Gastrocnemius medialis (tissue), 4 donors: ENCODE measurements at regions of chr2 and their contacts with region 1.

Region 1: DNA sequence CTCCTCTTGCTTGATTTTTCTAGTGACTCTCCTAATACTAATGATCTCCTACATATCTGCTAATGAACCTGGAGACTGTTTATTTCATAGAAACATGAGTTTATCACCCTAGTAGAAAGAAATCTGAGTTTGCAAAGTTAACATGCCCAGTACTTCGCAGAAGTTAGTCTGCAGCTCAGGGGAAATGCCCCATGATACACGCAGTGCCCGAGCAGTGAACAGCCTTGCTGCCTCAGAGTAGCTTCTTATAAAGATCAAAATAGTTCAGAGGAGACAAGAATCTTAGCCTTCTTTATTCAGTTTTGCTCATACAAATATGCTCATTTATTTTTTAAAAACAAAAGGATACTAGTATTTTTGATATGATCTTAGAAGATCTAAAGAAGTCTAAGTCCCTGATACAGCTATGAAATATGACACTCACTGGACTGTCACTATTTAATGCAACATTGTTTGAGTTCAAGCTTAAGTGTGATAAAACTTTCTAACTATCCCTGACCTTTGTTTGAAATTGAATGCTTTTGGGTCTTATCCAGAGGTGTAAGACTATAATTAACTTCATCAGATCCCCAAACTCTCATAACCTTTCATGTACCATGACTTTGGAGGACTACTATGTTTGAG is 20.5 kb downstream of the FRZB start:
- DNase-seq: no peak
- ATAC-seq: peak; percentile 45 to 88
- H3K4me3 ChIP-seq: peak overlapping the region in 1 of 4 donors; percentile 24
- H3K27ac ChIP-seq: peak overlapping the region in 3 of 4 donors; percentile 35 to 66 (median 60)
- H3K4me1 ChIP-seq: peaks cover 11 to 15% of the 10 kb centered on the region in 2 donors
- H3K27me3 ChIP-seq: no peaks in the 10 kb centered on the region
- CTCF ChIP-seq: no peak
- POLR2A ChIP-seq: no peak

Region 2: GRCh38 chr2:182473635-182474034 is 372.3 kb before region 1 on chr2:
- in situ Hi-C with region 1: no loop called
- intact Hi-C with region 1: no loop called
- DNase-seq: no peak
- ATAC-seq: no peak
- H3K4me3 ChIP-seq: no peak overlapping the region
- H3K27ac ChIP-seq: no peak overlapping the region
- H3K4me1 ChIP-seq: no peaks in the 10 kb centered on the region
- H3K27me3 ChIP-seq: no peaks in the 10 kb centered on the region
- CTCF ChIP-seq: no peak
- POLR2A ChIP-seq: no peak

Region 3: DNA sequence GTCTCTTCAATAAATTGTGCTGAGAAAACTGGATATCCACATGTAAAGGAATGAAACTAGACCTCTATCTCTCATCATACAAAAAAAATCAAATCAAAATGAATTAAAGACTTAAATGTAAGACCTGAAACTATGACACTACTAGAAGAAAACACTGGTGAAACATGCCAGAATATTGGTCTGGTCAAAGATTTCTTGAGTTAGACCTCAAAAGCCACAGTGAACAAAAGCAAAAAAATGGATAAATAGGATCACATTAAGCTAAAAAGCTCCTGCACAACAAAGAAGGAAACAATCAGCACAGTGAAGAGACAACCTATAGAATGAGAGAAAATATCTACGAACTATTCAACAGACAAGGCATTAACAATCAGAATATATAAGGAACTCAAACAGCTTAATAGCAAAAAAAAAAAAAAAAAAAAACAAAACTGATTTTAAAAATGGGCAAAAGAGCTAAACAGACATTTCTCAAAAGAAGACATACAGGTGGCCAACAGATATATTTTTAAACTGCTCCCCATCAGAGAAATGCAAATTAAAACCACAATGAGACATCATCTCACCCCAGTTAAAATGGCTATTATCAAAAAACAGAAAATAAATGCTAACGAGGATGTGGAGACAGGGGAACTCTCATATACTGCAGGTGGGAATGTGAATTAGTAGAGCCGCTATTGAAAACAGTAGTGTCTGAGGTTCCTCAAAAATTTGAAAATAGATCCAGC is 126.1 kb after region 1 on chr2:
- in situ Hi-C with region 1: no loop called
- intact Hi-C with region 1: loop called (anchors 5 kb)
- DNase-seq: no peak
- ATAC-seq: no peak
- H3K4me3 ChIP-seq: no peak overlapping the region
- H3K27ac ChIP-seq: no peak overlapping the region
- H3K4me1 ChIP-seq: peaks cover 9 to 10% of the 10 kb centered on the region in 2 donors
- H3K27me3 ChIP-seq: no peaks in the 10 kb centered on the region
- CTCF ChIP-seq: no peak
- POLR2A ChIP-seq: no peak